Activated T-helper 2 cell treated with anti-CD3 and anti-CD28 coated beads, Interferon-gamma antibody, Interleukin-2, Interleukin-4, amounts not matched to agents 10 μg/mL and 5 μg/mL and 100 μg/mL, durations not matched to agents 14 hours and 24 hours and 36 hours (primary cell): ENCODE measurements at regions of chr11 and their contacts with region 1.

Region 1: GRCh38 chr11:42770444-42771065 is 541.2 kb upstream of the API5 start:
- DNase-seq: no peak
- H3K4me3 Mint-ChIP-seq: no peak overlapping the region
- H3K27ac Mint-ChIP-seq: no peak overlapping the region
- H3K4me1 Mint-ChIP-seq: no peaks in the 10 kb centered on the region
- H3K27me3 Mint-ChIP-seq: no peaks in the 10 kb centered on the region

Region 2: GRCh38 chr11:42536611-42537360 is 233.8 kb before region 1 on chr11:
- intact Hi-C with region 1: no loop called
- DNase-seq: no peak
- H3K4me3 Mint-ChIP-seq: no peak overlapping the region
- H3K27ac Mint-ChIP-seq: no peak overlapping the region
- H3K4me1 Mint-ChIP-seq: no peaks in the 10 kb centered on the region
- H3K27me3 Mint-ChIP-seq: no peaks in the 10 kb centered on the region

Region 3: DNA sequence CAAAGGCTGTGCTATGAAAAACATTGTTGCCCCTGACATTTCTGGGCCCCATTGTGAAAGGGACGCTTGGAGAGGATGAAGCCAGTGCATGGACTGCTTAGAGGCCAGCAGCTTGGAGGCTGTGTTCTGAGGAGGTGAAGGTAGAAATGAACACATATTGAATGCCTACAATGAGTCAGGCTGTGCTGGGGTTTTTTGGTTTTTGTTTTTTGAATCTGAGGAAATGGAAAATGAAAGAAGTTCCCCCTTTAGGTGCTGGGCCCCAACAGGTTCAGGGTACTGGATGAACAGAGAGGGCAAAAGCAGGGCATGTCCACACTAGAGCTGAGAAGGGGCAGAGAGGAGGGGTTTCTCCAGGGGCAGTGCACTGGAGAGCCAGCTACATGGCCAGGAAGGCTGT is 375.1 kb after region 1 on chr11:
- intact Hi-C with region 1: no loop called
- DNase-seq: no peak
- H3K4me3 Mint-ChIP-seq: no peak overlapping the region
- H3K27ac Mint-ChIP-seq: peak overlapping the region; percentile 38
- H3K4me1 Mint-ChIP-seq: peaks cover 11% of the 10 kb centered on the region
- H3K27me3 Mint-ChIP-seq: no peaks in the 10 kb centered on the region

Region 4: DNA sequence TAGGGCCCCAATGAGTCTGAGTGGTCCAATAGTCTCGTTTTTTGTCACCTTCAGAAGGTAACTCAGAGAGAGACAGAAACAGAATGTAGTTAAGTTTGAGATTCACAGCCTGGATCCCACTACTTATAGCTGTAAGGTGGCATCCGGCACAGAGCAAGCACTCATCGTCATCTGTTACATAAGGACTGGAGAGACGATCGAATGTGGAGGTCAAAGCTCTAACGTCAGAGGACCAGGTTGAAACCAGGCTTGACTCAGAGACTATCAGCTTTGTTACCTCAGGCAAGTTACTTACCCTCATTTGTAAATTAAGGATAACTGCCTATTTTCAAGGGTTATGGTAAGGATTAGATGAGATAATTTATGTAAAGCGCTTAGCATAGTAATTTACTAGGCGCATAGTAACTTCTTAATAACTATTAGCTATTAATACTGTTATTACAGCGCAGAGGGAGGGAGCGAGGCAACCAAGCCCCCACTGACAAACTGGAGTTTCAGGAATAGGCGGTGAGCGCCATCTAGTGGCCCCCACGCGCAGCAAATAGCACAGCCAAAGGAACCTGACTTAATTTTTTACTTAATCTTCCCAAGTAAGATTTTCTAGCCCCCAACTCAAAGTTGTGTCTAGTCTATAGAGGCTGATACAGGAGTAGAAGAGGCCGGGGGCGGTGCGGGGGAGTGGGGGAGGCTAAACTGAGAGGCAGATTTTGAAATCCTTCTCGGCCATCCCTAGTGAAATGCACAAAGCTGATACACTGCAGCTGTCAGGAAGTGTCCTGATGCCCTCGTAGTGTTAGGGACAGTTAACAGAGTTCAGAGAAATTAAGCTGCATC is 512.3 kb after region 1 on chr11:
- intact Hi-C with region 1: loop called (anchors 2 kb)
- DNase-seq: no peak
- H3K4me3 Mint-ChIP-seq: no peak overlapping the region
- H3K27ac Mint-ChIP-seq: no peak overlapping the region
- H3K4me1 Mint-ChIP-seq: no peaks in the 10 kb centered on the region
- H3K27me3 Mint-ChIP-seq: peaks cover 2% of the 10 kb centered on the region